ENCODE measurements at regions of chr2 and their contacts with region 1.

Region 1: DNA sequence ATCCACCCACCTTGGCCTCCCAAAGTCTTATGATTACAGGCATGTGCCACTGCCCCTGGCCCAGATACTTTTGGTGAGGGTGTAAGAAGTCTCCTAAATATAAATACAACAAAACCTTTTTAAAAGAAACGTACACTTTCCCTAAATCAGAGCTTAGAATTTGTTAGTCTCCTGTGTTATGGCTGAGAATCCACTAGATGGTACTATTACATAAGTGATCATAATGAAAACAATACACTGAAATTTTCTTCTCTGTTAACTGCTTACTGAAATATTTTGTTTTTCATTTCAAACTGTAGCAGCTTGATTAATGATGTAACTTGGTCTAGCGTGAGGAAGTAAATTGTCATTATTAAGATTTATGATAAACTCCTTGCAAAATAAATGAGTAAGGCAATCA is 74.8 kb upstream of the FAM98A start:
- DNase-seq: peak; percentile 32
- H3K4me3 ChIP-seq: no peak overlapping the region
- H3K27ac ChIP-seq: no peak overlapping the region
- H3K4me1 ChIP-seq: no peaks in the 10 kb centered on the region
- H3K27me3 ChIP-seq: no peaks in the 10 kb centered on the region
- CTCF ChIP-seq: peak; percentile 8 to 18
- POLR2A ChIP-seq: no peak

Region 2: GRCh38 chr2:35428548-35428947 is 1754.6 kb after region 1 on chr2:
- CTCF ChIA-PET with region 1: interaction called, 10 read pairs
- POLR2A ChIA-PET with region 1: no interaction called
- dilution Hi-C with region 1: no loop called
- intact Hi-C with region 1: loop called (anchors 1 kb)
- DNase-seq: peak; percentile 22
- H3K4me3 ChIP-seq: no peak overlapping the region
- H3K27ac ChIP-seq: no peak overlapping the region
- H3K4me1 ChIP-seq: no peaks in the 10 kb centered on the region
- H3K27me3 ChIP-seq: peaks cover 2% of the 10 kb centered on the region in 2 experiments
- CTCF ChIP-seq: peak; percentile 56 to 65
- POLR2A ChIP-seq: no peak

Measured in endothelial cell of umbilical vein (primary cell).